ENCODE measurements at regions of chr17 and their contacts with region 1.

Region 1: DNA sequence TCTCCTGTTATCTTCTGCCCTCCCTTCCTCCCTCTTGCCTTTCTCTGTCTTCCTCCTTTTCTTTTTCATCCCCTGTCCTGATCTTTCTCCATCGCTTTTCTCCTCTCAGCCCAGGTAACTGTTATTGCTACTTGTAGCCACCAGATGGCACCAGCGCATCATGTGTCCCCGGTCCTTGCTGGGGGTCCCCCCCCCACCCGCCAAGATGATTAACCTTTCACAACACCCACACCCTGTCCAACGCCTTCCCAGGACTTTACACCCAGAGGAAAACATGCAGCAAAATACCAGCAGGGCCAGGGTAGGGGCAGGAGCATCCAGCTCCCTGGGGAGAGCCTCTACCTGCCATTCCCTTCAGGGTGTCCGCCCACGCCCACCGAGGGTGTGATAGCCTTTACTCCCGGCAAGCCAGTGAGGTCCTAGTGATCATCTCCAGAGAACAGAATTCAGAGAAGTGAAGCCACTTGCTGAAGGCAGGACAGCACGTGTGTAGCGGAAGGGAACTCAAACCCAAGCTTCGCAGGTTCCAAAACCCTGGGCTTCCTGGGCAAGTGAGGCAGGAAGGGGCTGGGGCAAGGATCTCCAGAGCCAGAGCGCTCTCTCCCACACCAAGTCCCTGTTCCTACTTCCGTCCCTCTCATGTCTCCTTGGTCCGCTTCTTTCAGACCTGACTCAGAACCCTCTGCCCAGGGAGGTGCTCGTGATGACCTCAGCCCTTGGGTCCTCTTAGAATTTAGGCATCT is 13.5 kb upstream of the TAC4 start:
- DNase-seq: no peak
- H3K4me3 ChIP-seq: no peak overlapping the region
- H3K27me3 ChIP-seq: peaks cover 8% of the 10 kb centered on the region
- CTCF ChIP-seq: peak; percentile 86

Region 2: GRCh38 chr17:49873466-49873865 is 12.1 kb after region 1 on chr17:
- CTCF ChIA-PET with region 1: interaction called, 23 read pairs
- POLR2A ChIA-PET with region 1: no interaction called
- DNase-seq: no peak
- H3K4me3 ChIP-seq: no peak overlapping the region
- H3K27me3 ChIP-seq: peaks cover 20% of the 10 kb centered on the region
- CTCF ChIP-seq: no peak

Region 3: DNA sequence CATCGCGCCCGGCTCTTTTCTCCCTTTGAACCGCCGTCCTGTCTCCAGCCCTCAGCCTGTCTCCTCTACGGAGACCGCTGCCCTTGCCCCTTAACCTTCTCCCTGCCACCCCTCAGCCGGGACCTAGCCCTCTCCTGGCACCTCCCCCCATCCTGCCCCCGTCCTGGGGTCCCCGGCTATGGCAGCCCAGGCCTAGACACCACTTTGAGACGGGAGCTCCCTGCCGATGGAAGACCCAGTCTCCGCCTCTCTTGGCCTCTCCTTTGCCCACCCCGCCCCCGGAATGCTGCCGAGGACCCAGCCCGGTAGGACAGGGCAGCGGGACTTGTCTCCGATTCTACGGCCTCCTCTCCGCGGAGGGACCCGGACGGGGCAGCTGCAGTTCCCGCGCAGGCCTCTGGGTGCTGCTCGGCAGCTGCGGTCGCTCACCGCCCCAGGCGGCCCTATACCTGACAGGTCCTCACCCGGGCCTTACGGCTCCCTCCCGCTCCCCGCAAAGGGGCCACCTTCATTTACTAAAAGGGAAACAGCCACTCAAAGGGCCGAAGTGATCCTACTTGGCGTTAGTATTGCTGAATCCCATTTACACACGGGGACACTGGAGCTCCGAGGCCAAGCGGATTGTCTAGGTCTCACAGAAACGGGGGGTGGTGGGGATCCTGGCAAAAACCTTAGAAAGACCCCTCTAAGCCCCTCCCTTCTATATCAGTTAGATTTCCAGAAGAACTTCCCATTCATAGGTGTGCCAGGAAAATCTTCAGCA is 19.2 kb after region 1 on chr17:
- CTCF ChIA-PET with region 1: interaction called, 23 read pairs
- POLR2A ChIA-PET with region 1: no interaction called
- DNase-seq: no peak
- H3K4me3 ChIP-seq: no peak overlapping the region
- H3K27me3 ChIP-seq: peaks cover 35% of the 10 kb centered on the region
- CTCF ChIP-seq: peak; percentile 96